ENCODE measurements at regions of chr5 and their contacts with region 1.

Region 1: DNA sequence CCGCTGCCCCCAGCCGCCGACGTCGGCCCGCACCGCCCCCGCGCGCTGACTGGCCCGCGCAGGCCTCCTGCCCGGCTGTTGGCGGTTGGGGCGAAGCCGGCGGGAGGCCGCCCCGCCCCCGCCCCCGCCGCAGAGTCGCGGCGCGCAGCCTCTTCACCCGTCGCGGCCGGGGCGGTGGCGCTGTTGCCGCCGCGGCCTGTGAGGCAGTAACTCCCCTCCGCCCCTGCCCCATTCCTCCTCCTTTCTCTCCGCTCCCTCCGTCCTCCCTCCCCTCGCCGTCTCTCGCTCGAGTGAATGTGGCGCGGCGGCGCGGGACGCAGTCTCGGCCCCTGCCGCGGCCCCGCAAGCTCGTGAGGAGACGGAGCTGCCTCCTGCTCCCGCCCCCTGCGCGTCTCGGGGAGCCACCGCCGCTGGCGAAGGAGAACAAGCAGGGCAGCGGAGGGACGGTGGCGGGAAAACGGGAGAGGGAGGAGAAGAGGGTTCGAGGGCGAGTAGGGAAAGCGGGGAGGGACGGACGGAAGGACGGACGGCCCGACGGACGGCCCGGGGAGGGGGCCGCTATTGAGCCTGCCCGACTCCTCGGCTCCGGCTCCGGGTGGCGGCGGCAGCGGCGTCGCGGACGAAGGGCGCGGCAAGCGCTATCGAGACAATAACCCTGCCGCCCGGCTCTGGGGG is 637 bp upstream of the ERBIN start:
- DNase-seq: peak; percentile 47
- ATAC-seq: peak; percentile 85
- H3K4me3 ChIP-seq: peak overlapping the region; percentile 81 to 90
- H3K27ac ChIP-seq: peak overlapping the region; percentile 92
- H3K4me1 ChIP-seq: peaks cover 15 to 49% of the 10 kb centered on the region in 2 experiments
- H3K27me3 ChIP-seq: no peaks in the 10 kb centered on the region
- CTCF ChIP-seq: peak in 2 of 3 experiments; percentile 26 to 27; a peak in 3 of 6 replicates
- POLR2A ChIP-seq: peak; percentile 51
- RAD21 ChIP-seq: peak; percentile 31; the same call in 1 of the 2 replicates

Region 2: GRCh38 chr5:65721720-65722574 is 203.8 kb before region 1 on chr5 and contains the starts of genes NLN and SGTB:
- CTCF ChIA-PET with region 1: no interaction called
- POLR2A ChIA-PET with region 1: no interaction called
- RAD21 ChIA-PET with region 1: no interaction called
- intact Hi-C with region 1: loop called (anchors 5 kb)
- DNase-seq: peak; percentile 37
- ATAC-seq: peak; percentile 93
- H3K4me3 ChIP-seq: peak within 1 kb of the TSS; percentile 83 to 91
- H3K27ac ChIP-seq: peak within 1 kb of the TSS; percentile 75
- H3K4me1 ChIP-seq: peaks cover 5 to 22% of the 10 kb centered on the region in 2 experiments; a peak in 3 of 4 replicates
- H3K27me3 ChIP-seq: no peaks in the 10 kb centered on the region
- CTCF ChIP-seq: no peak
- POLR2A ChIP-seq: no peak
- RAD21 ChIP-seq: no peak
- total RNA-seq, gene NLN: 67.6 TPM
- total RNA-seq, gene SGTB: 12.6 TPM

Region 3: DNA sequence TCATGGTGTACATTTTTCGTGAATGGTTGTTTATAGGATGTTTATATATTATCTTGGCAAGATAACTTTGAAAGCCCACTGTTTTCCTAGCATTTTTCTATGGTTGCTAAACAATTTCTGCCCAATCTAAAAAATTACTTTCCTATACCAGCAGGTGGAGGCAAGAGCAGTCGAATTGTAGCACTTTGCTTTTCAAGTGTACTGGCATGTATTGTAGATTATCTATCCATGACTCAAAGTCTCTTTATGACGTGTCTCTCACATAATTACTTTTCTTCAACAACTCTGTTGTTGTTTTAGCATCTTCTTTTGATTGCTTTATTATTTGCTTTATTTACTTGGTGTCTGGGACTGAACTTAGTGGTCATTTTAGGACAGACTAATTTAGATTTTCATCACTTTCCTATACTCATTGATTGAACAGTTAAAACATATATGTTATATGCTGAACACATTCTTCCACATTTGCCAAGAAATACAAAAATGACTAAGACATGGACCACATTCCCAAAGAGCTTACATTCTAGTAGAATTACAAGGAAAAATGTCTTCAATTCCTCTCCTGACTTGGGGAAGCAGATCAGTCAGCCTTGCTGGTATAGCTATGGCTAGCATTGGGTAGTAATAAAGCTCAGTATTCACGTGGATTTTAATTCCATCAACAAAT is 183.0 kb before region 1 on chr5:
- CTCF ChIA-PET with region 1: no interaction called
- POLR2A ChIA-PET with region 1: no interaction called
- RAD21 ChIA-PET with region 1: no interaction called
- intact Hi-C with region 1: loop called (anchors 5 kb)
- DNase-seq: peak; percentile 45
- ATAC-seq: peak; percentile 80
- H3K4me3 ChIP-seq: no peak overlapping the region
- H3K27ac ChIP-seq: no peak overlapping the region
- H3K4me1 ChIP-seq: peaks cover 6 to 17% of the 10 kb centered on the region in 2 experiments
- H3K27me3 ChIP-seq: no peaks in the 10 kb centered on the region
- CTCF ChIP-seq: peak; percentile 44 to 80 (median 64); a peak in 5 of 6 replicates
- POLR2A ChIP-seq: no peak
- RAD21 ChIP-seq: peak; percentile 88

Region 4: DNA sequence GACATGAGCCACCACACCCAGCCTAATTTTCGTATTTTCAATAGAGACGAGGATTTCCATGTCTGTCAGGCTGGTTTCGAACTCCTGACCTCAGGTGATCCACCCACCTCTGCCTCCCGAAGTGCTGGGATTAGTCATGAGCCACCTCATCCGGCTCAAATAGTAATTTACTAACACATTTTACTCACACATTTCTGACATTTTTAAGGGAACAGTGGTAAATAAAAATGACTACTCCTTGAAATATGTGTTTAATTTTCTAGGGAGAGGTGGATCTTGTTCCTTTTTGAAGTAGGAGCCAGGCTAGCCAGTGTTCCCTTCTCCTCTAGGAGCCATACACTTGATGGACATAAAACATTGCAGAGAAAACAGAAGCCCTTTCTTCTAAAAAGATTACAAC is 54.6 kb before region 1 on chr5:
- CTCF ChIA-PET with region 1: no interaction called
- POLR2A ChIA-PET with region 1: no interaction called
- RAD21 ChIA-PET with region 1: no interaction called
- intact Hi-C with region 1: loop called (anchors 5 kb)
- DNase-seq: peak; percentile 56
- ATAC-seq: peak; percentile 80
- H3K4me3 ChIP-seq: no peak overlapping the region
- H3K27ac ChIP-seq: peak overlapping the region; percentile 63
- H3K4me1 ChIP-seq: peaks cover 12 to 55% of the 10 kb centered on the region in 2 experiments
- H3K27me3 ChIP-seq: no peaks in the 10 kb centered on the region
- CTCF ChIP-seq: no peak
- POLR2A ChIP-seq: no peak
- RAD21 ChIP-seq: no peak; the same call in 1 of the 2 replicates

Region 5: DNA sequence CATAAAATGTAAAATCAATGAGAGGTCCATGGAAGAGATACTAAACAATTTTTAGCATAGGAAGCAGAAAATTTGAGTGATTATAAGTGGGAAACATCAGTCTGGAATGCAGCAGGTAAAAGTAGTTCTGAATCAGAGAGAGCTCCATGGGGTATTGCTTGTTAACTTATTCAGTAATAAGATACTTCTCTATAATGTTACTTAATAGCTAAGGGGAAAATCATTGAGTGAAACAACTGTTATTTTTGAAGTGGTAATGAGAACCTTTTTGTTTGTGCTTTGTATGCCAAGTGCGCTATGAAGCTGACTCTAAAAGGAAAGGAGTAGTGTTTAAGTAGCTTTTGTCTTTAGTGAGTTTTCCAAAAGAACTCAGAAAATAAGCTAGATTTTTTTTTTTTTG is 95.8 kb after region 1 on chr5:
- CTCF ChIA-PET with region 1: no interaction called
- POLR2A ChIA-PET with region 1: no interaction called
- RAD21 ChIA-PET with region 1: no interaction called
- intact Hi-C with region 1: no loop called
- DNase-seq: no peak
- ATAC-seq: no peak
- H3K4me3 ChIP-seq: no peak overlapping the region
- H3K27ac ChIP-seq: no peak overlapping the region
- H3K4me1 ChIP-seq: no peaks in the 10 kb centered on the region
- H3K27me3 ChIP-seq: no peaks in the 10 kb centered on the region
- CTCF ChIP-seq: no peak
- POLR2A ChIP-seq: no peak
- RAD21 ChIP-seq: no peak

Region 6: GRCh38 chr5:66144074-66144833 is 218.5 kb after region 1 on chr5 and contains the start of gene SREK1:
- CTCF ChIA-PET with region 1: no interaction called
- POLR2A ChIA-PET with region 1: no interaction called
- RAD21 ChIA-PET with region 1: no interaction called
- intact Hi-C with region 1: loop called (anchors 2 kb)
- DNase-seq: peak; percentile 83
- ATAC-seq: peak; percentile 88
- H3K4me3 ChIP-seq: peak within 1 kb of the TSS; percentile 74 to 84
- H3K27ac ChIP-seq: peak within 1 kb of the TSS; percentile 89
- H3K4me1 ChIP-seq: peaks cover 7 to 19% of the 10 kb centered on the region in 2 experiments; a peak in 3 of 4 replicates
- H3K27me3 ChIP-seq: no peaks in the 10 kb centered on the region
- CTCF ChIP-seq: no peak
- POLR2A ChIP-seq: peak; percentile 91
- RAD21 ChIP-seq: no peak
- total RNA-seq, gene SREK1: 65.6 TPM